Tibial artery (tissue), 4 donors: ENCODE measurements at regions of chrX and their contacts with region 1.

Region 1: DNA sequence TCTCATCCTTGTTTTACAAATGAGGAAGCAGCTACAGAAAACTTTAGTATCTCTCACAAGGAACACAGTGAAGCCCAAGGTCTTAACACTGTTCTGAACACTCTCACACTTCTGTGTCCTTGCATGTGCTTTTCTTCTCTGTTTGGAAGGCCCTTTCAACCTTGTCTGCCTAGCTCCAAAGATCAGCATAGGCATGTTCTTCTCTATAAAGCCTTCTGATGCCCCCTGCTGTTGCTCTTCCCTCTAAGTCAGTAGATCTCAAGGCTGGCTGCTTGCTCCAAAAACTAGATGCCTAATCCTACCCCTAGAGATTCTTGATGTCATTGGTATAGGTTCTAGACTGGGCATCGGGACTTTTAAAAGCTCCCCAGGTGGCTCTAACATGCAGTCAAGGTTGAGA is 5.9 kb downstream of the APOO start:
- DNase-seq: peak; percentile 48 to 64
- H3K4me3 ChIP-seq: peak overlapping the region in 1 of 2 donors; percentile 22
- H3K27ac ChIP-seq: peak overlapping the region; percentile 26 to 54
- H3K4me1 ChIP-seq: peaks cover 0 to 27% (median 4%) of the 10 kb centered on the region in 4 donors
- H3K27me3 ChIP-seq: no peaks in the 10 kb centered on the region
- CTCF ChIP-seq: peak; percentile 40 to 57

Region 2: DNA sequence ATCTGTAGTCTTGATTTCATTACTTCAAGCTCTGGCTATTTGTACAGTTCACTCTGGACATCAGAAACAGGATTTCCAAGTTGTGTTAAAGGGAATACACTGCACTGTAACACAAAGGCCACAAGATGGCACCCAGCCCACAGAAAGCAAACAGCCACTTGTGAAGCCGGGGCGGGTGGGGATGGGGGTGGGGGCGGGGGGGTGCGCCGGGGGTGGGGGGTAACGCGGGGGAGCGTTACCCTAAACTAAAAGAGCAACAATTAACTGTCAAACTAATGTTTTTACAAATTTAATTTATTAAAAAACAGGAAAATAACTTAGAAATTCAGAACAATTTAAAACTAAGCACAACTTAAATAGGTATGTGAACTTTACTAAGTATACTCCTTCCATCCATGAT is 207.2 kb before region 1 on chrX:
- intact Hi-C with region 1: loop called (anchors 5 kb)
- DNase-seq: peak in 1 of 2 donors; percentile 48
- H3K4me3 ChIP-seq: no peak overlapping the region
- H3K27ac ChIP-seq: no peak overlapping the region
- H3K4me1 ChIP-seq: no peaks in the 10 kb centered on the region
- H3K27me3 ChIP-seq: no peaks in the 10 kb centered on the region
- CTCF ChIP-seq: peak; percentile 34 to 39

Region 3: DNA sequence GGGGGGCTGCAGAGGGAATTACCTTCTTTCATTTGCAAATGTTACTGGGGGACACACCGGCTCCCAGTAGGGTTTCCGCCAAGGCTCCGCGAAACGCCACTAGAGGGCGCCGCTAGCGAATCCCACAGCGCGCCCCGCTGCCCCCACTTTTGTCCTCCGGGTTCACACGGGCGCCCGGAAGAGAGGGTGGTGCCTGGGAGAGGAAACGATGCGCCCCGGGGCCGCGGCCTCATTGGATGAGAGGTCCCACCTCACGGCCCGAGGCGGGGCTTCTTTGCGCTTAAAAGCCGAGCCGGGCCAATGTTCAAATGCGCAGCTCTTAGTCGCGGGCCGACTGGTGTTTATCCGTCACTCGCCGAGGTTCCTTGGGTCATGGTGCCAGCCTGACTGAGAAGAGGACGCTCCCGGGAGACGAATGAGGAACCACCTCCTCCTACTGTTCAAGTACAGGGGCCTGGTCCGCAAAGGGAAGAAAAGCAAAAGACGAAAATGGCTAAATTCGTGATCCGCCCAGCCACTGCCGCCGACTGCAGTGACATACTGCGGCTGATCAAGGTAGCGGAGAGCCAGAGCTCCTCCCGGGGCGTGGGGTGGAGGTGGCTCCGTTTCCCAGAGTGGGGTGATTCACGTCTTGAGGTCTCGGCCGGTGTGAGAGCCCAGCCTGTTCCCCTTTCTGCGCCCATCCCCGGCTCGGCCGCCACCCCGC is 118.8 kb before region 1 on chrX and contains the start of gene SAT1:
- intact Hi-C with region 1: loop called (anchors 2 kb)
- DNase-seq: peak; percentile 94 to 97
- H3K4me3 ChIP-seq: peak within 1 kb of the TSS; percentile 72 to 80
- H3K27ac ChIP-seq: peak within 1 kb of the TSS; percentile 94 to 95
- H3K4me1 ChIP-seq: peaks cover 0 to 3% (median 0%) of the 10 kb centered on the region in 4 donors
- H3K27me3 ChIP-seq: no peaks in the 10 kb centered on the region
- CTCF ChIP-seq: peak; percentile 65 to 76